ENCODE measurements at regions of chr2 and their contacts with region 1.

Region 1: DNA sequence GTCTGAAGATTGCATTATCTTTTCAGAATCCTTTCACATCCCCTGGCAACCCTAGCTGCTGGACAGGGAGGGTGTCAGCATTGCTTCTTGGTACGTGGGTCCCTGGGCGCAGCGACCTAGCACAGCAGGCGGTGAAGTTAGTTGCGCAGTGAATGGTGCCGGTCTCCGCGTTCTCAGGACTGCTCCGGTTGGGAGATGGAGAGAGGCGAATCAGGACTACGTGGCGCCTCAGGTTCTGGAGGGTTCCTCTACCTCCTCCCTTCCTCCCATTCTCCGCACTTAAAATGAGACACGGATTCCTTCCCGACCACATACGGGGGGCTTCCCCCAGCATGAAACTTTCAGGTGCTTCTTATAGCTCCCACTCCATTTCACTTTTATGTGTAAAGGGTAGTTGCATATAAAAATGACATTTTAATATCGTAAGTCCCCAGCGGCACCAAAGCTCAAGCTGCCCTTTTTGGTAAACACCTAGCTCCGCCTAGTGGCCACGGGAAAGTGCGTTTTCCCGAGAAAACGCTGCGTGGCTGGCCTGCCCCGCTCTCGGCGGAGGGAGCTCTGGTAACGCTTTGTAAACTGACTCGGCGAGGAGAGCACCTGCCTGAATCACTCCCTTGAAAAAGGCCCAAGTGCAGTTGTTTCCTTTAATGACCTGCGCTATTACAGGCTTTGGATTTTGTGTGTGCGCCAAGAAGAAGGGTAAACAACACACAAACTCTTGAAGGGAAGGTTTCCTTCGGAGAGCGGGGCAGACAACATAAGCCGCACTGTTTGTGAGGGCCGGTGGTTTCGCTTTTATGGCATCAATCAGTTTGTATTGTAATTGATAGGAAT is 32.9 kb upstream of the INHBB start:
- DNase-seq: peak; percentile 85
- H3K4me3 ChIP-seq: peak overlapping the region; percentile 21 to 31
- H3K27ac ChIP-seq: peak overlapping the region; percentile 59 to 72
- H3K4me1 ChIP-seq: no peaks in the 10 kb centered on the region
- H3K27me3 ChIP-seq: no peaks in the 10 kb centered on the region
- CTCF ChIP-seq: peak; percentile 87 to 93 (median 92)
- POLR2A ChIP-seq: no peak

Region 2: GRCh38 chr2:119950966-119951365 is 362.1 kb before region 1 on chr2:
- intact Hi-C with region 1: loop called (anchors 5 kb)
- DNase-seq: no peak
- H3K4me3 ChIP-seq: no peak overlapping the region
- H3K27ac ChIP-seq: no peak overlapping the region
- H3K4me1 ChIP-seq: no peaks in the 10 kb centered on the region
- H3K27me3 ChIP-seq: no peaks in the 10 kb centered on the region
- CTCF ChIP-seq: no peak
- POLR2A ChIP-seq: no peak

Region 3: DNA sequence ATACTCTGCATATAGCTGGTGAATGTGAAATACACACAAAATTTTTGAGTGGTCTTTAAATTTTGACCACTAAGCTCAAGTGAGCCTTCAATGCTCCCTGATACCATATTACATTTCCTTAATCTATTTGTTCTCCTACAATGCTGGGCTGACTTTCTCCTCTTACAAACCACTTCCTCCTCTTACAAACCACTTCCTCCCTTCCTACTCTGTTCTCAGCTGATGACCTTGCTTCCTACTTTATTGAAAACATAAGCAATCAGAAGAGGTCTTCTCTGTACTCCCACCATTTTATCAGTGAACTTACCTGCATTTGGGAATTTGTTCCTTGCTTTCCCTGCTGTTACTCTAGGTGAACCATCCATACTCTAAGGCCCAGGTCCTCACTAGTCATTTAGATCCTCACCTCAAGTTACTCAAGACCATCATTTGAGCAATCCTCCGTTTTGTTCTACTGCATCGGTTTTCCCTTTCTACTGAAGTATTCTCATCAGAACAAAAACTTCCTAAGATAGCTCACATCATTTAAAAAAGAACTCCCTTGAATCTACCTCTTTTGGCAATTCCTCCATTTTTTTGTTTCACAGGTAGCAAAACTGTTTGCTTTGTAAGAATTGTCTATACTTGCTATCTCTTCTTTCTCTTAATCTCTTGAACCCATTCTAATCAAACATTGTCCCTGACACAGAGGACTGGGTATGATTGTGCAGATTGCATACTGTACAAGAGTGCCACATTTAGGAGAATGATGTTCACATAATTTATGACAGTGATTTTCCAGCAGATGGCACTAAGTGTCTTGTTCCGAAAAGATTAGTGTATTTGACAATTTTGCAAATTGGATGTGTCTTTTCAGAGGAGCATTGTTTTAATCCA is 203.7 kb before region 1 on chr2:
- intact Hi-C with region 1: loop called (anchors 10 kb)
- DNase-seq: no peak
- H3K4me3 ChIP-seq: no peak overlapping the region
- H3K27ac ChIP-seq: no peak overlapping the region
- H3K4me1 ChIP-seq: no peaks in the 10 kb centered on the region
- H3K27me3 ChIP-seq: no peaks in the 10 kb centered on the region
- CTCF ChIP-seq: peak in 2 of 4 experiments; percentile 40 to 60
- POLR2A ChIP-seq: no peak

Region 4: DNA sequence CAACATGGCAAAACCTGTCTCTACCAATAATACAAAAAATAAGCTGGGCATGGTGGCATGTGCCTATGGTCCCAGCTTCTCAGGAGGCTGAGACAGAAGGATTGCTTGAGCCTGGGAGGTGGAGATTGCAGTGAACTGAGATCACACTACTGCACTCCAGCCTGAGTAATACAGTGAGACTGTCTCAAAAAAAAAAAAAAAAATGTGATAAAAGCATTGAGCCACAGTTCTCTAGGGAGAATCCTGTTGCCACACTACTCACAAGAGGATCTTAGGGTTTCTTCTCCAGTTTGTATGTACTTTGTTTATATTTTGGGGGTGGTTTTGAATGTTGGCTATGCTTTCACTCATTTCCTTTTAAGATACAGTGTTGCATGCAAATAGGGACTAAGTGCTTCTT is 151.9 kb before region 1 on chr2:
- intact Hi-C with region 1: no loop called
- DNase-seq: no peak
- H3K4me3 ChIP-seq: no peak overlapping the region
- H3K27ac ChIP-seq: no peak overlapping the region
- H3K4me1 ChIP-seq: no peaks in the 10 kb centered on the region
- H3K27me3 ChIP-seq: no peaks in the 10 kb centered on the region
- CTCF ChIP-seq: no peak
- POLR2A ChIP-seq: no peak

Measured in prostate gland (tissue), 2 donors.